ENCODE measurements at regions of chr11 and their contacts with region 1.

Region 1: GRCh38 chr11:32052218-32052617 is 38.7 kb upstream of the RCN1 start:
- DNase-seq: peak; percentile 52
- CTCF ChIP-seq: peak; percentile 62

Region 2: GRCh38 chr11:32062540-32062939 is 10.3 kb after region 1 on chr11:
- CTCF ChIA-PET with region 1: interaction called, 62 read pairs
- POLR2A ChIA-PET with region 1: no interaction called
- DNase-seq: no peak
- CTCF ChIP-seq: no peak

Region 3: GRCh38 chr11:32071811-32072210 is 19.6 kb after region 1 on chr11:
- CTCF ChIA-PET with region 1: interaction called, 62 read pairs
- POLR2A ChIA-PET with region 1: no interaction called
- DNase-seq: no peak
- CTCF ChIP-seq: no peak

Region 4: GRCh38 chr11:32168924-32169323 is 116.7 kb after region 1 on chr11:
- CTCF ChIA-PET with region 1: interaction called, 256 read pairs
- POLR2A ChIA-PET with region 1: no interaction called
- DNase-seq: no peak
- CTCF ChIP-seq: no peak